ENCODE measurements at regions of chr1 and their contacts with region 1.

Region 1: DNA sequence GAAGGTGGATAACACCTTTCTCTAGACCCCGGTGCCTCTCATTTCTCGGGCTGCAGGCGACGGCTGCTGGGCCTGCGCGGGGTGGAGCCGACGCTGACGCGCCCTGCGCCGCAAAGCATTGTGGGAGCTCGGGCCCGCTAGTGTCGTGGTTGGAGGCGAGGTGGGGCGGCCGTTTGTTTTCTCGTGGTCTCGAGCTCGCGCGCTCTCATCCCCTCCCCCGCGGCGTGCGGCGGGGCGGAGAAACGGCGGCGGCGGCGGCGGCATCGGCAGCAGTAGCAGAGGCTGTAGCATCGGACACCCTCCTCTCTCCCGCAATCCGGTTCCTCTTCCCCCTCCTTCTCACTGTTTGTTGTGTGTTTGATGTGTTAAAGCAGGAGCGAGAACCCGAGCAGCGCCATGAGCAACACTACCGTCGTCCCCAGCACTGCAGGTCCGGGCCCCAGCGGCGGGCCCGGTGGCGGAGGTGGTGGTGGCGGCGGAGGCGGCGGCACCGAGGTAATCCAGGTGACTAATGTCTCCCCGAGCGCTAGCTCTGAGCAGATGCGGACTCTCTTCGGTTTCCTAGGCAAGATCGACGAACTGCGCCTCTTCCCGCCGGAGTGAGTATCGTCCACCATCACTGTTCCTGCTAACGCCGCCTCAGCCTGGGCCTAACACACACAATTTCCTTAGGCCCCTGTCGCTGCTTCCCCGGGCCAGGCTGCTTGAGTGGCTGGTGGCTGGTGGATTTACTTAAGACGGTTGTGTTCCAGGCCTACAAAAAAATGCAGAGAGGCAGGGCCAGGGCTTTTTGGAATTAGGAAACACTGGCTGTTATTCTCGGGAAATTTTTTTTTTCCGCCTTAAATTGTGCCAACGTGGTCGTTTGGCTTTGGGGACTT is at the start of gene SRSF11:
- DNase-seq: peak; percentile 98
- ATAC-seq: peak; percentile 99
- H3K4me3 ChIP-seq: peak within 1 kb of the TSS; percentile 82
- H3K27ac ChIP-seq: peak within 1 kb of the TSS; percentile 95
- H3K4me1 ChIP-seq: peaks cover 45% of the 10 kb centered on the region
- H3K27me3 ChIP-seq: no peaks in the 10 kb centered on the region
- CTCF ChIP-seq: peak; percentile 10
- total RNA-seq, gene SRSF11: 47.0 to 70.3 (median 53.2) TPM

Region 2: GRCh38 chr1:70205434-70206118 is 15.9 kb before region 1 on chr1 and contains the start of gene LRRC40:
- intact Hi-C with region 1: loop called in 1 of 2 experiments (anchors 2 kb)
- DNase-seq: peak; percentile 98
- ATAC-seq: peak; percentile 98 to 100 (median 100)
- H3K4me3 ChIP-seq: peak within 1 kb of the TSS; percentile 97
- H3K27ac ChIP-seq: peak within 1 kb of the TSS; percentile 88
- H3K4me1 ChIP-seq: peaks cover 54% of the 10 kb centered on the region
- H3K27me3 ChIP-seq: no peaks in the 10 kb centered on the region
- CTCF ChIP-seq: no peak
- total RNA-seq, gene LRRC40: 5.5 to 8.7 (median 7.3) TPM

Region 3: GRCh38 chr1:70290218-70290617 is 68.7 kb after region 1 on chr1:
- intact Hi-C with region 1: no loop called
- DNase-seq: no peak
- ATAC-seq: no peak
- H3K4me3 ChIP-seq: no peak overlapping the region
- H3K27ac ChIP-seq: no peak overlapping the region
- H3K4me1 ChIP-seq: no peaks in the 10 kb centered on the region
- H3K27me3 ChIP-seq: no peaks in the 10 kb centered on the region
- CTCF ChIP-seq: no peak

Region 4: GRCh38 chr1:70354332-70355110 is 133.0 kb after region 1 on chr1 and contains the start of gene ANKRD13C:
- intact Hi-C with region 1: loop called in 1 of 2 experiments (anchors 1 kb)
- DNase-seq: peak; percentile 92 to 95
- ATAC-seq: peak; percentile 98
- H3K4me3 ChIP-seq: peak within 1 kb of the TSS; percentile 78
- H3K27ac ChIP-seq: peak within 1 kb of the TSS; percentile 90
- H3K4me1 ChIP-seq: peaks cover 37% of the 10 kb centered on the region
- H3K27me3 ChIP-seq: no peaks in the 10 kb centered on the region
- CTCF ChIP-seq: no peak
- total RNA-seq, gene ANKRD13C: 10.5 to 18.1 (median 11.7) TPM

Measured in psoas muscle (tissue), 8 donors.